Activated CD4-positive, alpha-beta memory T cell treated with anti-CD3 and anti-CD28 coated beads for 36 hours (primary cell): ENCODE measurements at regions of chr3 and their contacts with region 1.

Region 1: DNA sequence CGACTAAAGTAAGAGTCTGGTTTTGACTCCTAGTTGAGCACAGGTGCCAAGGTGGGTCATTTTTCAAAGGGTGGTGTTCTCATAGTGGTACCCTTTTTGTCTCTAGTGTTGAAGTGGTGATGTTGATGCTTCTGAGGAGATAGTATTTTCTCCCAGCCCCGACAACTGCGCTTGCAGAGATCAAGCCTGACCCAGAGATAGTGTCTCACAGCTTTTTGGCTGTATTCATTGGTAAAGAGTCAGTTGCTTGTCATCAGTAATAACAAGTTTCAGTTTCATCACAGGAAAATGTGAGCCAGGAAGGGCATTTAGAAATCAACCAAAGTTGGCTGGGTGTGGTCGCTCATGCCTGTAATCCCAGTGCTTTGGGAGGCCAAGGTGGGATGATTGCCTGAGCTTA is 139.3 kb downstream of the NFKBIZ start:
- DNase-seq: peak; percentile 40
- H3K4me3 Mint-ChIP-seq: no peak overlapping the region
- H3K27ac Mint-ChIP-seq: no peak overlapping the region
- H3K4me1 Mint-ChIP-seq: peaks cover 29% of the 10 kb centered on the region
- H3K27me3 Mint-ChIP-seq: peaks cover 11% of the 10 kb centered on the region

Region 2: GRCh38 chr3:101913173-101913572 is 75.4 kb before region 1 on chr3:
- CTCF ChIA-PET with region 1: no interaction called
- POLR2A ChIA-PET with region 1: no interaction called
- intact Hi-C with region 1: no loop called
- DNase-seq: no peak
- H3K4me3 Mint-ChIP-seq: no peak overlapping the region
- H3K27ac Mint-ChIP-seq: no peak overlapping the region
- H3K4me1 Mint-ChIP-seq: peaks cover 3% of the 10 kb centered on the region
- H3K27me3 Mint-ChIP-seq: no peaks in the 10 kb centered on the region

Region 3: GRCh38 chr3:101950510-101950909 is 38.1 kb before region 1 on chr3:
- CTCF ChIA-PET with region 1: no interaction called
- POLR2A ChIA-PET with region 1: no interaction called
- intact Hi-C with region 1: loop called (anchors 5 kb)
- DNase-seq: peak; percentile 33
- H3K4me3 Mint-ChIP-seq: no peak overlapping the region
- H3K27ac Mint-ChIP-seq: peak overlapping the region; percentile 28
- H3K4me1 Mint-ChIP-seq: peaks cover 19% of the 10 kb centered on the region
- H3K27me3 Mint-ChIP-seq: no peaks in the 10 kb centered on the region

Region 4: DNA sequence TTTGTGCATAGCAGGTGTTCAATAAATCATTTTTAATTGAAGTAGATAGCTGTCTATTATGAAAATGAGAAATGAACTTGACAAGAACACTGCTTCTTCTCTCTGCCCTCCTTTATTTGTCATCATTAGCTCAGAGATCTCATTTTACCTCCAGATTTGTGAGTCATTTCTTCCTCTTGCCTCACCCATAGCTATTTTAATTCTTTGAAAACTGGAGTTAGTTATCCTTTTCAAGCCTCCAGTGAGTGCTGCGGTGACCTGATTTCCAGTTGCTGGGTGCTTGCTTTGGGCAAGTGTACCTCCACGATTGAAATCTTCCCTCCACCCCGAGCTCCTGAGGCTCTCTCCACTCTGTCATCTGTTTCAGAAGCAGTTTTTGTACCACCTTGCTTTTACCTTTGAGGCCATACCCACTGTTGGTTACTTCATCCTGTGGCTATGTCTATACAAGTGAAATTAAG is 24.7 kb before region 1 on chr3:
- CTCF ChIA-PET with region 1: interaction called, 4 read pairs
- POLR2A ChIA-PET with region 1: no interaction called
- intact Hi-C with region 1: loop called (anchors 1 kb)
- DNase-seq: peak; percentile 60
- H3K4me3 Mint-ChIP-seq: no peak overlapping the region
- H3K27ac Mint-ChIP-seq: no peak overlapping the region
- H3K4me1 Mint-ChIP-seq: peaks cover 24% of the 10 kb centered on the region
- H3K27me3 Mint-ChIP-seq: no peaks in the 10 kb centered on the region

Region 5: DNA sequence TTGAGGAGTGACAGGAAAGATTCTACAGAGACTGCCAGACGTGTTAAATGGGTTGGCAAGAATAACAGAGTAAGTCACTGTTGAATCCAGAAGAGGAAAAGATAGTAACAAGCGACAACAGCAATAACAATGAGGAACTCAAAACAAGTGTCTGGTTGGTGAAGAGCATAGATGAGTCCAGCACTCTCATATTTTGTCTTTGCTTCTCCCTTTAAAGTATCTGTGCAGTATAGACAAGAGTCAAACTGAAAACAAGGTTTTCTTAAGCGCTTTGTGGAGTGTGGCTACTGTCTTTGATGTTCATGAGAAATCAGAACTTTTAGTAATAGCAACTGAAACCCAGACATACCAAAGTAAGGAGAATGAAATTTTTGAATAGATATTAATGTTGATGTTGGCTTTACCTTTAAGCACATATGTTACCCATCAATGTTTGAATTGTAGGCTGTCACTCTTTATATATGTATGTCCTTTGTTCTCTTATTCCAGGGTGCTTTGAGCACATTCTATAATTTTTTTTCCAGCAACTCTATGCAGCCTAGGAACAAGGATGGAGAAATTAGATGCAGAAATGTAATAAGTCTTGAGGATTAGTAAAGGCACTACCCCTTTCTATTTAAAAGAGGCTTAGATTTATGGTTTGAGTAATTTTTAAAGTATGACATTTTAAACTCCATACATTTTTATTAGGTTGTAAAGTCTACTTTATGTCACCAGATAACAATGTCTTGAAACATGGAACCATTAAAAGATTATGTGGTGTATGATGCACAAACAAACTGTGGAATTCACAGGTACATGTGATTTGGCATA is 46.3 kb after region 1 on chr3:
- CTCF ChIA-PET with region 1: no interaction called
- POLR2A ChIA-PET with region 1: no interaction called
- intact Hi-C with region 1: loop called (anchors 2 kb)
- DNase-seq: no peak
- H3K4me3 Mint-ChIP-seq: no peak overlapping the region
- H3K27ac Mint-ChIP-seq: no peak overlapping the region
- H3K4me1 Mint-ChIP-seq: no peaks in the 10 kb centered on the region
- H3K27me3 Mint-ChIP-seq: no peaks in the 10 kb centered on the region

Region 6: GRCh38 chr3:102057781-102058421 is 69.3 kb after region 1 on chr3:
- CTCF ChIA-PET with region 1: no interaction called
- POLR2A ChIA-PET with region 1: no interaction called
- intact Hi-C with region 1: loop called (anchors 2 kb)
- DNase-seq: no peak
- H3K4me3 Mint-ChIP-seq: no peak overlapping the region
- H3K27ac Mint-ChIP-seq: no peak overlapping the region
- H3K4me1 Mint-ChIP-seq: peaks cover 40% of the 10 kb centered on the region
- H3K27me3 Mint-ChIP-seq: peaks cover 1% of the 10 kb centered on the region

Region 7: DNA sequence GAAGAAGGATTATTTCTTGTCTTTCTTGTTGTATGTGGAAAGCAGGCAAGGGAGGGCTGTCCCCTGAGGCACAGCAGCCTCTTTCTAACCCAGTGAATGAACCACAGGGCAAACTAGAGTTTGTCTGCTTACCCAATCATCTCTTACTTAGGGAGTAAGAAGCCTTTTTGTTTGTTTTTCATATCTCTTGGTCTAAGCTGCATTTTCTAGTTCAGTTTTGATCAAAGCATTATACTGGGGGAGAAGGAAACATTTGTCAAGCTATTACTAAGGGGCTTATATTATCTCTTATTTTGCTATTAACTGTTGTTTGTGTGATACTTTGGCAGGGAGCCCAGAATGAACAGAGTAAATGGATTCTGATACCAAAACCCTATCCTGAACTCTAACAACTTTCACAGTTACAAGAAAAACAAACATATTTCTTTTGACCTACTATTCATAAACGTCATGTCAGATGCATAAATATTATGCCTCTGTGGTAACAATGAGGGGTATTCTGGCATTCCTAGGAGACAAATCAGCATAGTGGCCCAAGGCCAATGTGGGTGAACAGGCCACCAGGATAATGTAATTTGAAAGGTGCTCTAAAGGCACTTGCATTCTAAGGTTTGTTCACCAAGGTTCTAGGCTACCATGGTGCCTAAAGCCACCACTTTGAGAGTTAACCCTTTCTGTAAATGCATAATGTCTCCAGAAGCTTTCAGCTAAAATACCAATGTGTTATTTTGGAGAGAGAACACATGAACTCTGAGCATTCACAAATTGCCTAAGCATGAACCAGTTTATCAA is 174.6 kb after region 1 on chr3:
- CTCF ChIA-PET with region 1: no interaction called
- POLR2A ChIA-PET with region 1: no interaction called
- intact Hi-C with region 1: loop called (anchors 1 kb)
- DNase-seq: no peak
- H3K4me3 Mint-ChIP-seq: no peak overlapping the region
- H3K27ac Mint-ChIP-seq: no peak overlapping the region
- H3K4me1 Mint-ChIP-seq: peaks cover 23% of the 10 kb centered on the region
- H3K27me3 Mint-ChIP-seq: no peaks in the 10 kb centered on the region